ENCODE measurements at regions of chr7 and their contacts with region 1.

Region 1: DNA sequence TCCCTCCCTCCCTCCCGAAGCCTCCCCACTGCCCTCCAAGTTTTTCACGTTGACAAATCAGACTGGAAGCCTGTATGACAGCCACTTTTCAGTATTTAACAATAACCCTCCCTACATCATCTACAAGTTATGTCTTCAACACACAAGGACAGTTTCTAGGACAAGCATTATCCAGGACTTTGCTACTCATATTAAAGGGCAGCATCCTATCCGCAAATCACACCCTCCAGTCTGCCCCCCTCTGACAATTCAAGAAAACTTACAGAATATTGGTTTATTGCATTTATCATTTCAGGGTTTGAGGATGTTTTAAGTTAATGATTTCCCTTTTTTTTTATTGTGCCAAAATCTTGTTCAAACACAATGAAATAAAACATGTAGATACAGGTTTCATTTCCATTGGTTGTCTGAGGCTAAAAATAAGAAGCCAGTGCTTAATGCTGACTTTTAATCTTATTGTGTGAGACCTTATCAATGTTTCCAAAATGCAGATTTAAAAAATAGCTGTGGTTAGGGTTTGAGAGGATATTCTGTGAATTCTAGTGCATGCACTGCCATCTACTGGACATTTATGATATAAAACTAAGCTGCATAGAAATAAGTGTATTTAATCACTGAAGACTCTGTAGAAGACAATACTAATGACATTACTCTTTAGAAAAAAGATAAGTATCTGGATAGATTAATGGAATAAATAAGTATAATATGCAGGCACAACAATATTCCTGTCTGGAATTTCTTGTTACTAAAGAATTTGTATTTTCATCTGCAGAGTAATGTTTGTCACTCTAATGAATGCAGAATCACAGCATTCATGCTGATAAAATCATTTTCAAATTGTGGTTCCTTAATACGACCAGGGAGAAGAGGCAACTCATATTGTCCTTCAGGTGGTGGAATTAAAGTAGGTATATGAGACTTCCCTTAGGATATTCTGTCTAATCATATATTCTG is 64.1 kb downstream of the CAV1 start:
- DNase-seq: peak; percentile 62
- H3K4me3 Mint-ChIP-seq: no peak overlapping the region
- H3K27ac Mint-ChIP-seq: peak overlapping the region; percentile 9
- H3K4me1 Mint-ChIP-seq: peaks cover 25% of the 10 kb centered on the region
- H3K27me3 Mint-ChIP-seq: peaks cover 26% of the 10 kb centered on the region

Region 2: GRCh38 chr7:116173051-116174028 is 415.6 kb before region 1 on chr7:
- intact Hi-C with region 1: loop called (anchors 1 kb)
- DNase-seq: peak; percentile 78
- H3K4me3 Mint-ChIP-seq: no peak overlapping the region
- H3K27ac Mint-ChIP-seq: no peak overlapping the region
- H3K4me1 Mint-ChIP-seq: peaks cover 4% of the 10 kb centered on the region
- H3K27me3 Mint-ChIP-seq: peaks cover 28% of the 10 kb centered on the region

Region 3: DNA sequence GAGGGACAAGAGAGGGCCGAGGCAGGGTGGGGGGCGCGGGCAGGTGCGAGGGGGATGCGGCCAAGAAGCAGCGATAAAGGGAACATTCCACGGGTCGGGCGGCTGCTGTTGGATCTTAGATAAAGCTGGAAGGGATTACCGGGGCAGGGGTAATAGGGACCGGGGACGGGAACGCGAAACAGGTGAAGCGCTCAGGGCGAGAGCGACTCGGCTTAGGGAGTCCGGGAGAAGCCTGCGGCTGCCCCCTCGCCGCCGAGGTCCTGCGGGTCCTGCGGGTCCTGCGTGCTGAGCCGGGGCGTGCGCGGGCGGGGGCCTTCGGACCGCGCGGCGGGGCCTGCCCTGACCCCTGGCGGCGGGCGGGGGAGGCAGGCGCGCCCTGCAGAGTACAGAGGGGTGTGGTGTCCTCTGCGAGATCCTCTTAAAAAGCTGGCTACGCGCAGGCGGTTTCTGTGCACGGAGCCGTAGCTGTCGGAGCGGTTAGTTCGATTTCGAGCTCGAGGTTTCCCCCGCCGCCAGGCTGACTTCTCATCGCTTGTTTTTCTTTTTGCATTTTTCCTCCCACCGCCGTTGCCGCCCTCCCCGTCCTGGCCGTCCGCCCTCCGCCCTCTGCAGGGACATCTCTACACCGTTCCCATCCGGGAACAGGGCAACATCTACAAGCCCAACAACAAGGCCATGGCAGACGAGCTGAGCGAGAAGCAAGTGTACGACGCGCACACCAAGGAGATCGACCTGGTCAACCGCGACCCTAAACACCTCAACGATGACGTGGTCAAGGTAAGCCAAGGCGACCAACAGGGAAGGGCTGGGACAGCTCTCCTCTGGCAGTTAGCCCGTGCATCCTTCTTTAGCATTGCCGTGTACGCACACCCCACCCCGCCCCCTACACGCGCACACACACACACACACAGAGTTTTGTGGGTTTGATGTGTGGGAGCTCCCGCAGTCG is 62.7 kb before region 1 on chr7:
- intact Hi-C with region 1: loop called (anchors 1 kb)
- DNase-seq: peak; percentile 89
- H3K4me3 Mint-ChIP-seq: peak overlapping the region; percentile 88
- H3K27ac Mint-ChIP-seq: peak overlapping the region; percentile 67
- H3K4me1 Mint-ChIP-seq: peaks cover 27% of the 10 kb centered on the region
- H3K27me3 Mint-ChIP-seq: peaks cover 81% of the 10 kb centered on the region

Region 4: DNA sequence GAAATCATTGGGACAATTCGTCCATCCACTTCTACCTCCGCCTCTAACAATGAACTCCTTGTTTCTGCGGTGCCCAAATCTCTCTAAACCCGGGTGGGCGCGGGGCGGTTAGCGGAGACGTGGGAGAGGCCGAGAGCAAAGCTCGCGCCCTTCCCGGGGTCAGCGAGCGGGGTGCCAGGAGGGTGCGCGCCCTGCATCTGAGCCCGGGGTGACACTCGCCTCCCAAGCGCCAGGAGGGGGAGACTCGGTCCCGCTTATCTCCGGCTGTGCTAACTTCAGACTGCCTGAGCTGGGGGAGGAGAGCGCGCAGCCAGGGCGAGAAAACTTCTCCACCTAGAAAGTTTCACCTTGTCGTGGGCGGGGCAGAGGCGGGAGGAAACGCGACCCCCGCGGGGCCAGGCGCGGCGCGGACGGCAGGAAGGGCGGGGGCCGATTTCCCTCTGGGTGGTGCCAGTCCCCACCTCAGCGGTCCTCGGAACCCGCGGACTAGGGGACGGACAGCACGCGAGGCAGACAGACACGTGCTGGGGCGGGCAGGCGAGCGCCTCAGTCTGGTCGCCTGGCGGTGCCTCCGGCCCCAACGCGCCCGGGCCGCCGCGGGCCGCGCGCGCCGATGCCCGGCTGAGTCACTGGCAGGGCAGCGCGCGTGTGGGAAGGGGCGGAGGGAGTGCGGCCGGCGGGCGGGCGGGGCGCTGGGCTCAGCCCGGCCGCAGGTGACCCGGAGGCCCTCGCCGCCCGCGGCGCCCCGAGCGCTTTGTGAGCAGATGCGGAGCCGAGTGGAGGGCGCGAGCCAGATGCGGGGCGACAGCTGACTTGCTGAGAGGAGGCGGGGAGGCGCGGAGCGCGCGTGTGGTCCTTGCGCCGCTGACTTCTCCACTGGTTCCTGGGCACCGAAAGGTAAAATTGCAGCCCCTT is 83.0 kb after region 1 on chr7 and contains the start of gene MET:
- intact Hi-C with region 1: loop called (anchors 5 kb)
- DNase-seq: peak; percentile 75
- H3K4me3 Mint-ChIP-seq: peak within 1 kb of the TSS; percentile 75
- H3K27ac Mint-ChIP-seq: peak within 1 kb of the TSS; percentile 71
- H3K4me1 Mint-ChIP-seq: peaks cover 9% of the 10 kb centered on the region
- H3K27me3 Mint-ChIP-seq: peaks cover 69% of the 10 kb centered on the region
- total RNA-seq, gene MET: 2.2 and 2.3 TPM in 2 replicates

Measured in activated CD4-positive, alpha-beta T cell treated with anti-CD3 and anti-CD28 coated beads, Interleukin-2, amount 10 ng/mL, durations not matched to agents 24 days and 14 days (primary cell).